Activated T-helper 2 cell treated with anti-CD3 and anti-CD28 coated beads, Interferon-gamma antibody, Interleukin-2, Interleukin-4, amounts not matched to agents 10 μg/mL and 5 μg/mL and 100 μg/mL, durations not matched to agents 14 hours and 24 hours and 36 hours (primary cell): ENCODE measurements at regions of chr10 and their contacts with region 1.

Region 1: DNA sequence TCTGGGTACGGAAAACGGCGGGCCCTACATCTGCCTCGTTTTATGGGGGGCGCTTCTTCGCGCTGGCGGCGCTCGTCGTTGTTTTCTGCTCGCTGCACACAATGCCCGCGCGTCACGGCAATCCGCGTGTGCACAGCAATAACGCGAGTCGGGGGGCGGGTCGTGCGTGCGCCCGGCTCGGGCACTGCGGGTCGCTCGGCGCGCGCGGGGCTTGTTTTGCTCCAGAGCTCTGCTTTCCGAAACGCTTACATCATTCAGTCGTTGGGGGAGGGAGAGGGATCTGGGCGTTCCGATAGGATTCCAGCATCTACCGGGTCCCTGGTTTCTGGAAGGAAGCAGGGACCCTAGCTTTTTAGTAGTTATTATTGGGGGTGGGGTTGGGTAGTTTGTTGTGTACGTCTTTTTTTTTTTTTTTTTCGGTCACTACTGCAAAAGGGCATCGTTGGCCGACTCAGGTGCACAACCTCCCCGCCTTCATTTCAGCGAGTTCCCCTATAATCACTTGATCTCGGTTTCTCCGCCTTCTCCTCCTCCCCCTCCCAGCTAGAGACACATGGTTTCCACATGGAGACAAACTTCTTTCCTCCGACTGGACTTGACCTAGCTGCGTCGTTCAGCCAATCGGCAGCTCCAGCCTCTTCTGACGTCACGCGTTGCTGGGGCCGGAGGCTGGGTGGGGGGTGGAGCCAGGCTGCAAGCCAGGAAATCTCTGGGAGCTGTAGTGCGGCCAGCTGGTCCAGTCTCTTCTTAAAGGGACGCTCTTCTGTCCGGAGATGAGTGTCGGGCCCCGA is 3.5 kb downstream of the MXI1 start:
- DNase-seq: peak; percentile 89
- H3K4me3 Mint-ChIP-seq: peak overlapping the region; percentile 89
- H3K27ac Mint-ChIP-seq: peak overlapping the region; percentile 93
- H3K4me1 Mint-ChIP-seq: peaks cover 61% of the 10 kb centered on the region
- H3K27me3 Mint-ChIP-seq: peaks cover 21% of the 10 kb centered on the region

Region 2: DNA sequence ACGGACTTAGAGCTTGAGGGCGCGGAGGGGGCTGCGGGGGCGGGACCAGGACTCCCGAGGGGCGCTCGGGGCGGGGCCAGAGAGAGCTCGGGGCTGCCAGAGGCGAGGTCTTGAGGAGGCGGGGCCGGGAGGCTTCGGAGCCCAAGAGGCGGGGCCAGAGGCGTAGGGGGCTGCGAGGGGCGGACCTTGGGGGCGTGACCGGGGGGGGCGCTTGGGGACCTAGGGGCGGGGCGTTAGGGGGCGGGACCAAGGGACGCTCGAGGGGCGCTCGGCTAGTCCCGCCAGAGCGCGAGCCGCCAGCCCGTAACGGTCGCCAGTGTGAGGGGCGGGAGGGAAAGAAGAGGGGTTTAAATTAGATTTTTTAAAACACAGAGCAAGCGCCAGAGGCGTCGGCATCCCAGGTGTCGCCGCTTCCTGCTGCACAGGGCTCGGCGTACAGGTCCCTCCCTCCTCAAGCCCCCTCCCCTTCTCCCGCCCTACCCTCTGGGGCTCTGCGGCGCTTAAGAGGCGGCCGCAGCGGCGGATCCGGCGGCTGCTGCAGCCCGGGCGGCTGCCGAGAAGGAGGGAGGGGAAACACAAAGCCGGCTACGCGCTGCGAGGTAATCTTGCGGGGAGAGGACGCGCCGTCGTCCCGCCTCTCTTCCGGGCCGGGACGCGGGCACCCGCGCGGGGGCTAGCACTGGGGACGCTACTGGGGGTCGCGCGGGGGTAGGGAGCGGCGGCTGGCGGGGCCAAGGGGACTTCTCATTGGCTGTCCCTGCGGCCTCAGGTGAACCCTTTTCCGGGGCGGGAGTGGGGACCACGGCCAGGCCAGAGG is 203.0 kb before region 1 on chr10 and contains the start of gene ADD3:
- intact Hi-C with region 1: loop called (anchors 5 kb)
- DNase-seq: peak; percentile 81
- H3K4me3 Mint-ChIP-seq: peak within 1 kb of the TSS; percentile 92
- H3K27ac Mint-ChIP-seq: peak within 1 kb of the TSS; percentile 89
- H3K4me1 Mint-ChIP-seq: peaks cover 41% of the 10 kb centered on the region
- H3K27me3 Mint-ChIP-seq: peaks cover 4% of the 10 kb centered on the region
- total RNA-seq, gene ADD3: 37.8 and 47.4 TPM in 2 replicates

Region 3: GRCh38 chr10:110137142-110137545 is 73.7 kb before region 1 on chr10:
- intact Hi-C with region 1: loop called (anchors 1 kb)
- DNase-seq: no peak
- H3K4me3 Mint-ChIP-seq: no peak overlapping the region
- H3K27ac Mint-ChIP-seq: no peak overlapping the region
- H3K4me1 Mint-ChIP-seq: peaks cover 31% of the 10 kb centered on the region
- H3K27me3 Mint-ChIP-seq: no peaks in the 10 kb centered on the region

Region 4: GRCh38 chr10:110252151-110252550 is 41.3 kb after region 1 on chr10:
- intact Hi-C with region 1: loop called (anchors 2 kb)
- DNase-seq: no peak
- H3K4me3 Mint-ChIP-seq: no peak overlapping the region
- H3K27ac Mint-ChIP-seq: no peak overlapping the region
- H3K4me1 Mint-ChIP-seq: peaks cover 31% of the 10 kb centered on the region
- H3K27me3 Mint-ChIP-seq: peaks cover 48% of the 10 kb centered on the region

Region 5: GRCh38 chr10:110497438-110498086 is 286.7 kb after region 1 on chr10 and contains the start of gene DUSP5:
- intact Hi-C with region 1: loop called (anchors 5 kb)
- DNase-seq: peak; percentile 95
- H3K4me3 Mint-ChIP-seq: peak within 1 kb of the TSS; percentile 97
- H3K27ac Mint-ChIP-seq: peak within 1 kb of the TSS; percentile 84
- H3K4me1 Mint-ChIP-seq: peaks cover 47% of the 10 kb centered on the region
- H3K27me3 Mint-ChIP-seq: no peaks in the 10 kb centered on the region
- total RNA-seq, gene DUSP5: 84.3 and 86.2 TPM in 2 replicates